ENCODE measurements at regions of chrX and their contacts with region 1.

Region 1: GRCh38 chrX:20224814-20225487 is 41.8 kb downstream of the RPS6KA3 start:
- DNase-seq: no peak
- H3K4me3 ChIP-seq: no peak overlapping the region
- H3K27ac ChIP-seq: no peak overlapping the region
- H3K4me1 ChIP-seq: no peaks in the 10 kb centered on the region
- H3K27me3 ChIP-seq: no peaks in the 10 kb centered on the region
- CTCF ChIP-seq: no peak

Region 2: DNA sequence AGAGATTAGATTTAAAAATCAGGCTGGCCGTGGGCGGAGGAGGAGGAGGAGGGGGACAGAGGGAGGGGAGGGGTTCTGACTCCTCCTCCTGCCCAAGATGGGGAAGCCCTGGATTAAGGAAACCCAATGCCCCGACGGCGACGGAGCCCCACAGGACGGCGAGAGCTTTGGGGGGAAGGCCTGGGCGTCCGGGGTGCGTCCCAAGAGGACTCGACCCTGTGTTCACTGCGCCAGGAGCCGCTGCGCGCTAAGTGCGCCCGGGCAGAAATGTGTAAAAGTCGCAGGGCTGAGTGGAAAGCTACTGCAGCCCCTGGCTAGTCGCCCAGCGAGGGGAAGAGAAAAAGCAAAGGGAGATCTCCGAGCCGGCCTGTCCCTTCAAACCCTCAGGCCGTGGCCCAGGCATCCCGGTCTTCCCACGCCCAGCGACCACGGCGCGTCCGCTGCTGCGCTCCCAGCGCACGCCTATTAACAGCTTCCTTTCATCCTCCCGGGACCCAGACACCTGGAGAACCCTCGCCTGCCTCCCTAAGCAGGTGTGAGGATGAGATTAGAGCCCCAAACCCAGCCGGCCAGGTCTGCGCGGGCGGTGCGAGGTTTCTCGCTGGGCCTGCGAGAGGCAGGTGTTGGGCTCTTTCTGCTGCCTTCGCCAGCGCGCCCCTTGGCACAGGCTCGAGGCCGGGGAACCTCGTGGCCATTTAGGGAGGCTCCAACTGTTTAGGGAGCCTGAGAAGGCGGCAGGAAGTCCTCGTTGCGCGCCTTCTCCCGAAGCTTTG is 43.2 kb after region 1 on chrX:
- intact Hi-C with region 1: loop called (anchors 1 kb)
- DNase-seq: peak in 1 of 2 donors; percentile 73
- H3K4me3 ChIP-seq: peak overlapping the region; percentile 58 to 87
- H3K27ac ChIP-seq: peak overlapping the region; percentile 79 to 94
- H3K4me1 ChIP-seq: no peaks in the 10 kb centered on the region
- H3K27me3 ChIP-seq: peaks cover 4% of the 10 kb centered on the region
- CTCF ChIP-seq: no peak

Region 3: DNA sequence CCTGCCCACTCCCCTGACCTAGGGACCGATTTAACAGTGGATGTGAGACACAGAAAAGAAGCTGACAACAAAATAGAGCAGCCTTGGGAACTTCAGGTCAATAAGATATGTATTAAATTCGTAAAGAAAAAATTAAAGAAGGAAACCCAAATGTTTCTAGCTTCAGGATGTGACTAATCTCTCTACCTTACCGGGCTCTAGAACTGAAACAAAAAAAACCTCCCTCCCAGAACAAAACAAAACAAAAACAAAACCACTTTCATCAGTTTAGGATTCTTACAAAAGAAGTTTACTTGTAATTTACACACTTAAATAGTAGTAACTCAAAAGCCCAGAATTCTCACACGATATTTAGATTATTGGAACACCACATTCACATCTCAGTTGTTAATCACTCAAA is 227.5 kb after region 1 on chrX:
- intact Hi-C with region 1: no loop called
- DNase-seq: no peak
- H3K4me3 ChIP-seq: no peak overlapping the region
- H3K27ac ChIP-seq: no peak overlapping the region
- H3K4me1 ChIP-seq: no peaks in the 10 kb centered on the region
- H3K27me3 ChIP-seq: no peaks in the 10 kb centered on the region
- CTCF ChIP-seq: no peak